HEK293 (cell line): ENCODE measurements at regions of chr7 and their contacts with region 1.

Region 1: GRCh38 chr7:4883374-4884144 is at the start of gene RADIL:
- H3K4me3 ChIP-seq: peak within 1 kb of the TSS; percentile 63
- H3K27ac ChIP-seq: peak within 1 kb of the TSS; percentile 60; the same call in 1 of the 2 replicates
- H3K4me1 ChIP-seq: no peaks in the 10 kb centered on the region
- CTCF ChIP-seq: peak; percentile 73

Region 2: GRCh38 chr7:4797858-4798705 is 85.5 kb before region 1 on chr7:
- CTCF ChIA-PET with region 1: interaction called, 14 read pairs
- POLR2A ChIA-PET with region 1: no interaction called
- H3K4me3 ChIP-seq: no peak overlapping the region
- H3K27ac ChIP-seq: no peak overlapping the region
- H3K4me1 ChIP-seq: no peaks in the 10 kb centered on the region; the same call in 1 of the 2 replicates
- CTCF ChIP-seq: peak; percentile 87

Region 3: GRCh38 chr7:4830176-4830575 is 53.4 kb before region 1 on chr7:
- CTCF ChIA-PET with region 1: interaction called, 10 read pairs
- POLR2A ChIA-PET with region 1: no interaction called
- H3K4me3 ChIP-seq: no peak overlapping the region
- H3K27ac ChIP-seq: no peak overlapping the region
- H3K4me1 ChIP-seq: no peaks in the 10 kb centered on the region
- CTCF ChIP-seq: 0 out of 2 replicates have a peak, but pooled peaks have one; percentile 32

Region 4: GRCh38 chr7:4849369-4849768 is 34.2 kb before region 1 on chr7:
- CTCF ChIA-PET with region 1: interaction called, 34 read pairs
- POLR2A ChIA-PET with region 1: no interaction called
- H3K4me3 ChIP-seq: no peak overlapping the region
- H3K27ac ChIP-seq: no peak overlapping the region
- H3K4me1 ChIP-seq: no peaks in the 10 kb centered on the region
- CTCF ChIP-seq: no peak

Region 5: GRCh38 chr7:4856336-4857057 is 27.1 kb before region 1 on chr7:
- CTCF ChIA-PET with region 1: interaction called, 12 read pairs
- POLR2A ChIA-PET with region 1: no interaction called
- H3K4me3 ChIP-seq: no peak overlapping the region
- H3K27ac ChIP-seq: no peak overlapping the region
- H3K4me1 ChIP-seq: no peaks in the 10 kb centered on the region
- CTCF ChIP-seq: no peak

Region 6: GRCh38 chr7:4866528-4867496 is 16.7 kb before region 1 on chr7:
- CTCF ChIA-PET with region 1: interaction called, 17 read pairs
- POLR2A ChIA-PET with region 1: no interaction called
- H3K4me3 ChIP-seq: no peak overlapping the region
- H3K27ac ChIP-seq: no peak overlapping the region
- H3K4me1 ChIP-seq: no peaks in the 10 kb centered on the region
- CTCF ChIP-seq: no peak

Region 7: DNA sequence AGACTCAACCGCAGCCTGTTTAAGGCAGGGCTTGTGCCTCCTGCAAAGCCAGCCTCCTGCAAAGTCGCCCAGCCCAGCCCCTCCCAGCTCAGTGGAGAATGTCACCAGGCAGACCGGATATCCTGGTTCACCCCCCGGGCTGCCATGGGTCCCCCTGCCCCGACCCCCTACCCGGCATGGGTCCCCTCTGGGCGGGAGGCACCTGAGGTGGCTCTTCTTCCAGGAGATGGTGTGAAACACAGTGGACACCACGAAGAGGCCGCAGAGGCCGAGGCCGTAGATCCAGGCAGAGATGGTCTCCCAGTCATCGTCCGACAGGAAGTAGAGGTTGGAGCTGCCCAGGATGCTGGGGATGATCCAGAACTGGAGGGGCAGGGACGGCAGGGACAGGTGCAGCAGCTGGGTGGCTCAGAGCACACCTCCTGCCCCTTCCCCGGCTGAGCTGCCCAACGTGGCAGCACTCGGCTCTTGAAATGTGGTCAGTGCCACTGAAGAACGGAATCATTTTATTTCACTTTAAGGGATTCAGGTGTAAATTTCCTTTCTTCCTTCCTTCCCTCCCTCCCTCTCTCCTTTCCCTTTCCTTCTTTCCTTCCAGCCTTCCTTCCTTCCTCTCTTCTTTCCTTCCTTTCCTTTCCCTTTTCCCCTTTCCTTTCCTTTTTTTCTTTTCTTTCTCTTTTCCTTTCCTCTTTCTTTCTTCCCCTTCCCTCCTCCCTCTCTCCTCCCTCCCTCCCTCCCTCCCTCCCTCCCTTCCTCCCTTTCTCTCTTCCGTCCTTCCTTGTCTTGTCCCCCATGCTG is 36.6 kb after region 1 on chr7:
- CTCF ChIA-PET with region 1: interaction called, 10 read pairs
- POLR2A ChIA-PET with region 1: no interaction called
- H3K4me3 ChIP-seq: no peak overlapping the region
- H3K27ac ChIP-seq: no peak overlapping the region
- H3K4me1 ChIP-seq: no peaks in the 10 kb centered on the region
- CTCF ChIP-seq: no peak

Region 8: GRCh38 chr7:5382281-5382892 is 498.8 kb after region 1 on chr7:
- CTCF ChIA-PET with region 1: no interaction called
- POLR2A ChIA-PET with region 1: no interaction called
- H3K4me3 ChIP-seq: no peak overlapping the region
- H3K27ac ChIP-seq: no peak overlapping the region; the same call in 1 of the 2 replicates
- H3K4me1 ChIP-seq: peaks cover 18% of the 10 kb centered on the region
- CTCF ChIP-seq: no peak